PC-9 (cell line): ENCODE measurements at regions of chr1 and their contacts with region 1.

Region 1: GRCh38 chr1:15272009-15272788 is 25.2 kb downstream of the FHAD1 start:
- DNase-seq: peak; percentile 54 to 65
- H3K4me3 ChIP-seq: no peak overlapping the region
- H3K27ac ChIP-seq: no peak overlapping the region
- H3K4me1 ChIP-seq: no peaks in the 10 kb centered on the region
- H3K27me3 ChIP-seq: no peaks in the 10 kb centered on the region
- CTCF ChIP-seq: peak; percentile 77

Region 2: DNA sequence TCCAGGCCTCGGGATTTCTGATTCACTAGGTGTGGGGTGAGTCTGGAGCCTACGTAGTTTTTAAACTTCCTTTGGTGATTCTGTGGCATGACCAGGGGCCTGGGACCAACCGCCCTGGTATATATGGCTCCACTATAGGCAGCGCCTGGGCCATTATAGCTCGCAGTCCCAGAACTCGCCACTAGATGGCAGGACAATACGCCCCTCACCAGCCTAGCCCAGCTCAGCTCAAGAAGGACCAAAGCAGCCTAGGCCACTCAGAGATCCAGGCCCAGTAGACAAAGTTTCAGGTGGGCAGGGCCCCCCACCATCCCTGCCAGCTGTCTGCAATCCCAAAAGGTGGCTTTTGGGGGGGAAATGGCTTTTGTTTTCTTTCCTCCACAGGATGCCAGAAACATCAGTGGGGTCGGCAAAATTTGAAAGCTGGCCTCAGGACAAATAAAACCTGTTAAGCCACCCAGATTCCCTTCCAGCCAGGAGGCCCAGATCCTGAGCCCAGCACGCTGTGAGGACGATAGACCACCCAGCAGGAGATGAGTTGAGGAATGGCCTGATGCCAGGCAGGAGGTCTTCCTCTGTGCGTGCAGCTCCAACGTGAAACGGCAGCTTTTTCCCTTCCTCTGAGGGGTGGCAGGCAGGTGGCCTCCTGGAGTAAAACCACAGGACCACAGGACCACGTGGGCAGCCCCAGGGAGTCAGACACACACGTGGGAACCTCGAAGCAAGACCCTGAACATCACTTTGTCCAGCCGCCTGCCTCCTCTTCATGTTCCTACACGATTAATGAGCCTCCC is 143.5 kb before region 1 on chr1:
- CTCF ChIA-PET with region 1: interaction called, 15 read pairs
- POLR2A ChIA-PET with region 1: no interaction called
- intact Hi-C with region 1: loop called (anchors 1 kb)
- DNase-seq: peak in 1 of 2 experiments; percentile 73
- H3K4me3 ChIP-seq: no peak overlapping the region
- H3K27ac ChIP-seq: no peak overlapping the region
- H3K4me1 ChIP-seq: no peaks in the 10 kb centered on the region
- H3K27me3 ChIP-seq: no peaks in the 10 kb centered on the region
- CTCF ChIP-seq: peak; percentile 87

Region 3: DNA sequence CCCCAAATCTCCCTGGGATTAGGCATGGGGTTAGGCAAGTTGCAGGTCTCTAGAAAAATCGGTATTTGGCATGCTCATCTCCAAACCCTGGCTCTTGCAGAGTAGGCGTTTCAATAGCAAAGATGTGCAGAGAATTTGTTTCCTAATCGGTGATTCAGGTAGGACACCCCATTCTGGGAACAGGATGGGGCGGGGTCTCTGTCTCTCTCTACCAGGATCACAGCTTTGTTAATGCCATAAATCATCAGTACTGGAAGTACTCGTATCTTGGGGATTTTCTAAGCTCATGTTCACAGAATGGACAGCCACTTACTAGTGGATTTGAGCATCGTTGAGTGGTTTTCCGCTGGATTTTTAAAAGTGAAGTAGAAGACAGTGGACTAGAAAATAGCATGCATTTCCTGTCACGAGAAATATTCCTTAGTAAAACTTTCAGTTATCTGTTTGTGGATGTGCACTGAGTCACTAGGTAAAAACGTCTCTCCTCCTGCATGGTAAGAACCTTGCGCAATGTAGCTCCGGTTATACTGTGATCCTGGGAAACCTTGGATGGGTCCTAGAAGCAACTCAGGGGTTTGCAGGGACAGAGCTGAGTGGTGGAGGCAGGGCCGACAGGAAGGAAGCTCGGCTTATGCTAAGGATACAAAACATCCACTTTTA is 113.6 kb before region 1 on chr1:
- CTCF ChIA-PET with region 1: no interaction called
- POLR2A ChIA-PET with region 1: no interaction called
- intact Hi-C with region 1: no loop called
- DNase-seq: peak in 1 of 2 experiments; percentile 37
- H3K4me3 ChIP-seq: no peak overlapping the region; the same call in 1 of the 2 replicates
- H3K27ac ChIP-seq: peak overlapping the region; percentile 48
- H3K4me1 ChIP-seq: peaks cover 17% of the 10 kb centered on the region
- H3K27me3 ChIP-seq: no peaks in the 10 kb centered on the region
- CTCF ChIP-seq: no peak

Region 4: DNA sequence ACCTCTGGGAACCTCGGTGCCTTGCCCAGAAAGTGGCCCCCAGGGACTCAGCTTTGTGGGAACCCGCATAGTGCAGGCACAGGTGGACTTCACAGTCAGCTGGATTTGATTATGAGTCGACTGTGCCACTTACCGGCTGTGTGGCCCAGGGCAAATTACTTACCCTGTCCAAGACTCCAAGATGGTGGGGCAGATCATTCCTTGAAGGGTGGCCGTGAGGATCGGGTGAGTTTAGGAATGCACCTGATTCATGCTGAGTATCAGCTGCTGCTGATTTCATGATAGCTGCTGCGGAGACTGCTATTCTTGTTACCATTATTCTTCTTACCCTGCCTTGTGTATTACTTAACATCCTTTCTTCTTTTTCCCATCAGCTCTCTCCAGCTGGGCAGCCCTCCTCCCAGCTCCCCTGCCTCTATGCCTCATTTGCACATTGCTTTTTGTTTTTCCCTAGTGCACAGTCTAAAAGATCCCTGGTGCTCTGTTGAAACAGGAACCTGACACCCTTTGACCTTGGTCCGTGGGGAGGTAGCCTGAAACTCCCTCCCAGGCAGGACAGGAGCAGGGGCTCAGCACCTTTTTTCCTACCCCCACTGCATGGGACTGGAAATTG is 65.7 kb before region 1 on chr1:
- CTCF ChIA-PET with region 1: interaction called, 4 read pairs
- POLR2A ChIA-PET with region 1: no interaction called
- intact Hi-C with region 1: loop called (anchors 2 kb)
- DNase-seq: peak; percentile 59 to 88
- H3K4me3 ChIP-seq: no peak overlapping the region; the same call in 1 of the 2 replicates
- H3K27ac ChIP-seq: peak overlapping the region; percentile 68
- H3K4me1 ChIP-seq: peaks cover 33% of the 10 kb centered on the region
- H3K27me3 ChIP-seq: no peaks in the 10 kb centered on the region
- CTCF ChIP-seq: no peak

Region 5: DNA sequence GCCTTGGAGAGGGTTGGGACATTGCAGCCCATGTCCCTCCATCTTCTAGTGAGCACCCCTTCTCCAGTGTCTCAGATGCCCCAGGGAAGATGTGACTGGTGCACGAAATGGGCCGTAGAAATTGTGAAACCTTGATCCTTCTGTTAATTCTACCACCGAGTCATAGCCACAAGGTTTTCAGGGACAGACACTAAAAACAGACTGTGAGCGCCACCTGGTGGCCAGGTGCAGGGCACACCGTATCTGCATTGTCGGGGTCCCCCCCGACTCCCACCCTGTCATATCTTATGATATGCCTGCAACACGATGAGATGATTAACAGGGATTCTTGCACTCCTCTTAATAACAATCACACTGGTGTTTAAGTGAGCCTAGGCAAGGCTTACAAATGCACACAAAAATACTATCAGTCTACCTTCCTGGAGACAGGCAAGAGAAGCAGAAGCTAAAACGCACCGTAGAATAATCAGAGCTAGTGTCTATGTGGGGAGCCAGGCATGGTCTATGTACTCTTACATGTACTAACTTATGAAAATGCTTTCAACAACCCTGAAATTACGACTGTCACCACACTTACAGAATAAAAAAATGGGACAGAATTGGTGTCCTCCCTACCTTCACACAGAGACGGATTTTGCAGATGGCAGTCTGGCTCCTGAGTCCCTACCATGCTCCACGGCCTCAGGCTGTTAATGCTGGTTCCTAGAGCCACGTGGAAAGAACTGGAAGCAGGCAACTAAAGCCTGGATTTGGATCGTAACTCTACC is 32.7 kb after region 1 on chr1:
- CTCF ChIA-PET with region 1: no interaction called
- POLR2A ChIA-PET with region 1: no interaction called
- intact Hi-C with region 1: loop called (anchors 1 kb)
- DNase-seq: peak; percentile 35 to 44
- H3K4me3 ChIP-seq: no peak overlapping the region
- H3K27ac ChIP-seq: no peak overlapping the region
- H3K4me1 ChIP-seq: no peaks in the 10 kb centered on the region
- H3K27me3 ChIP-seq: no peaks in the 10 kb centered on the region
- CTCF ChIP-seq: peak; percentile 91

Region 6: DNA sequence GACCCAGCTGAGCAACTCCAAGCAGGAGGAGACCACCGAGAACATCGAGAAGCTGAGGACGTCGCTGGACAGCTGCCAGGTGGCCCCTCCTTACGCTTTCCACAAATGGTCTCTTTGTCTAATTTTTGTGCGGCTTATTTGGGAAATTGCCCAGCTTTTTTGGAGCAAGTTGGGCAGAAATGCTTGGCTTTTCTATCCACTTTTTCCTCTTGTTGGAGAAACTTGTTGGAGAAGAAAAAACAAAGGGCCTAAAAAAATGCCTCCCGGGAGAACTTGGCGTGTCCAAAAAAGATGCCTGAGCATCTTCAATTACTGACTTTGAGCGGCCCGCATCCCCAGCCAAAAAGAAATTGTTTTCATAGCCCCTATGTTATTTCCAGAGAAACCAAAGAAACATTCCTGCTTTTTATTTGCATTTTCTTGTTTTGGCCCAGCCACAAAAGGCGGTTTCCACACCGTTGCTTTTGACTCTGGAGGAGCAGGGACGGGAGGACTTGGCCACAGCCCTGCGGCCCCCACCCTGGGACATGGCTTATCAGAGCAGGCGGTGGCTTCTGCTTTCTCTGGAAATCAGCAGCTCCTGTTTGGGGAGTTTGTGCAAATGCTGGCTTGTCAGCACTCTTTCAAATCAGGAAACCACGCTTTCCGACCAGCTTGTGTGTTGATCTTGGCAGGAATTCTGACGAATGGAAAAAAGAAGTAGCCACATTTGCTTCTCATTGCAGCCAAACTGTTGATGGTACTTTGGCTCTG is 56.3 kb after region 1 on chr1:
- CTCF ChIA-PET with region 1: no interaction called
- POLR2A ChIA-PET with region 1: no interaction called
- intact Hi-C with region 1: no loop called
- DNase-seq: no peak
- H3K4me3 ChIP-seq: no peak overlapping the region
- H3K27ac ChIP-seq: no peak overlapping the region
- H3K4me1 ChIP-seq: no peaks in the 10 kb centered on the region
- H3K27me3 ChIP-seq: no peaks in the 10 kb centered on the region
- CTCF ChIP-seq: no peak

Region 7: GRCh38 chr1:15430787-15431570 is 158.8 kb after region 1 on chr1:
- CTCF ChIA-PET with region 1: interaction called, 6 read pairs
- POLR2A ChIA-PET with region 1: no interaction called
- intact Hi-C with region 1: loop called (anchors 1 kb)
- DNase-seq: peak in 1 of 2 experiments; percentile 59
- H3K4me3 ChIP-seq: no peak overlapping the region
- H3K27ac ChIP-seq: no peak overlapping the region
- H3K4me1 ChIP-seq: 0 out of 2 replicates have a peak, but pooled peaks cover 6% of the 10 kb centered on the region
- H3K27me3 ChIP-seq: no peaks in the 10 kb centered on the region
- CTCF ChIP-seq: peak; percentile 94

Region 8: GRCh38 chr1:15741183-15741850 is 469.1 kb after region 1 on chr1:
- CTCF ChIA-PET with region 1: no interaction called
- POLR2A ChIA-PET with region 1: no interaction called
- intact Hi-C with region 1: loop called (anchors 5 kb)
- DNase-seq: peak; percentile 63 to 88
- H3K4me3 ChIP-seq: no peak overlapping the region
- H3K27ac ChIP-seq: no peak overlapping the region
- H3K4me1 ChIP-seq: no peaks in the 10 kb centered on the region
- H3K27me3 ChIP-seq: no peaks in the 10 kb centered on the region
- CTCF ChIP-seq: peak; percentile 82